CD8-positive, alpha-beta T cell (primary cell): ENCODE measurements at regions of chr2 and their contacts with region 1.

Region 1: DNA sequence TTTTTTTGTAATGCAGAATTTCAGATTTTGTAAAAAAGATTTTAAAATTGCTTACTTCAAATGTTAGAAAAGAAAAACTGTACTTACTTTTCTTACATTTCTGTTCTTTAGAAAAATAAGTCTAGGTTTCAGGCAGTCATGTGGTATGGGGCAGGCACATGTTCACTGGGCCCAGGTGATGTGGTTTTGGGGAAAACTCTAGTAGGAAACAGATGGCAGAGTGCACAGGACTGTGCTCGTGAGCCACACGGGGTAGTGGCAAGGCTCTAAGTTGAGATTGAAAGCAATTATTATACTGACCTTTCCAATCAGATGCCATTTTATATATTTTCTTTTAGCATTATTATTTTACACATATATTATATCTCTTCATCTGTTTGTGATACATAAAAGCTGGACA is 1036.9 kb upstream of the TMEFF2 start:
- DNase-seq: no peak
- ATAC-seq: no peak
- H3K4me3 ChIP-seq: no peak overlapping the region
- H3K4me3 Mint-ChIP-seq: no peak overlapping the region
- H3K27ac ChIP-seq: no peak overlapping the region
- H3K27ac Mint-ChIP-seq: no peak overlapping the region
- H3K4me1 ChIP-seq: no peaks in the 10 kb centered on the region
- H3K4me1 Mint-ChIP-seq: no peaks in the 10 kb centered on the region
- H3K27me3 ChIP-seq: no peaks in the 10 kb centered on the region
- H3K27me3 Mint-ChIP-seq: no peaks in the 10 kb centered on the region
- CTCF ChIP-seq: no peak

Region 2: DNA sequence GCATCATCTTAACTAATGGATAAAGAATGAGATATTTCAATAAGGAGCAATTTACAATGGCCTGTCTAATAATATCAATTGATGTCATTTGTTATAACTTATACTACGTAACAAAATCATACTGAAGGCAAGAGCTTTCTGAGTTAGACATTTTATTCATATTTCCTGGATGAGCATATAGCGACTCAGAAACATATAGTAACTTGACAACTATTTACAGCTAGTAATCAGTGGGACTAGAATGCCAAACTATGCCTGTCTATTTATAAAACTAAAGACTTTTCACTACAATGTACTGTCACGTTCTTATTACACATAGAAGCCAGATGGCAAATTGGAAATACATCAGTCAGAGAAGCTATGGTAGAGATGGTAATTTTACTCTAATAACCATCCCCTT is 270.7 kb before region 1 on chr2:
- CTCF ChIA-PET with region 1: no interaction called
- POLR2A ChIA-PET with region 1: no interaction called
- intact Hi-C with region 1: no loop called
- DNase-seq: no peak
- ATAC-seq: no peak
- H3K4me3 ChIP-seq: no peak overlapping the region
- H3K4me3 Mint-ChIP-seq: no peak overlapping the region
- H3K27ac ChIP-seq: no peak overlapping the region
- H3K27ac Mint-ChIP-seq: no peak overlapping the region
- H3K4me1 ChIP-seq: no peaks in the 10 kb centered on the region
- H3K4me1 Mint-ChIP-seq: no peaks in the 10 kb centered on the region
- H3K27me3 ChIP-seq: no peaks in the 10 kb centered on the region
- H3K27me3 Mint-ChIP-seq: no peaks in the 10 kb centered on the region
- CTCF ChIP-seq: no peak

Region 3: GRCh38 chr2:193201583-193201982 is 30.1 kb before region 1 on chr2:
- CTCF ChIA-PET with region 1: no interaction called
- POLR2A ChIA-PET with region 1: no interaction called
- intact Hi-C with region 1: loop called in 1 of 2 experiments (anchors 2 kb)
- DNase-seq: no peak
- ATAC-seq: no peak
- H3K4me3 ChIP-seq: no peak overlapping the region
- H3K4me3 Mint-ChIP-seq: no peak overlapping the region
- H3K27ac ChIP-seq: no peak overlapping the region
- H3K27ac Mint-ChIP-seq: no peak overlapping the region
- H3K4me1 ChIP-seq: no peaks in the 10 kb centered on the region
- H3K4me1 Mint-ChIP-seq: no peaks in the 10 kb centered on the region
- H3K27me3 ChIP-seq: no peaks in the 10 kb centered on the region
- H3K27me3 Mint-ChIP-seq: no peaks in the 10 kb centered on the region
- CTCF ChIP-seq: no peak